Common myeloid progenitor, CD34-positive (primary cell): ENCODE measurements at regions of chr2 and their contacts with region 1.

Region 1: GRCh38 chr2:199739413-199740110 is 111.4 kb downstream of the FTCDNL1 start:
- DNase-seq: peak; percentile 65 to 83 (median 76)
- H3K4me3 ChIP-seq: peak overlapping the region in 3 of 7 experiments; percentile 20 to 34 (median 31)
- H3K27ac ChIP-seq: no peak overlapping the region
- H3K4me1 ChIP-seq: peaks cover 20 to 31% (median 27%) of the 10 kb centered on the region in 4 experiments
- H3K27me3 ChIP-seq: no peaks in the 10 kb centered on the region

Region 2: GRCh38 chr2:199727306-199727705 is 12.3 kb before region 1 on chr2:
- CTCF ChIA-PET with region 1: interaction called, 21 read pairs
- POLR2A ChIA-PET with region 1: no interaction called
- DNase-seq: peak in 1 of 3 donors; percentile 18
- H3K4me3 ChIP-seq: no peak overlapping the region
- H3K27ac ChIP-seq: no peak overlapping the region
- H3K4me1 ChIP-seq: no peaks in the 10 kb centered on the region
- H3K27me3 ChIP-seq: no peaks in the 10 kb centered on the region

Region 3: DNA sequence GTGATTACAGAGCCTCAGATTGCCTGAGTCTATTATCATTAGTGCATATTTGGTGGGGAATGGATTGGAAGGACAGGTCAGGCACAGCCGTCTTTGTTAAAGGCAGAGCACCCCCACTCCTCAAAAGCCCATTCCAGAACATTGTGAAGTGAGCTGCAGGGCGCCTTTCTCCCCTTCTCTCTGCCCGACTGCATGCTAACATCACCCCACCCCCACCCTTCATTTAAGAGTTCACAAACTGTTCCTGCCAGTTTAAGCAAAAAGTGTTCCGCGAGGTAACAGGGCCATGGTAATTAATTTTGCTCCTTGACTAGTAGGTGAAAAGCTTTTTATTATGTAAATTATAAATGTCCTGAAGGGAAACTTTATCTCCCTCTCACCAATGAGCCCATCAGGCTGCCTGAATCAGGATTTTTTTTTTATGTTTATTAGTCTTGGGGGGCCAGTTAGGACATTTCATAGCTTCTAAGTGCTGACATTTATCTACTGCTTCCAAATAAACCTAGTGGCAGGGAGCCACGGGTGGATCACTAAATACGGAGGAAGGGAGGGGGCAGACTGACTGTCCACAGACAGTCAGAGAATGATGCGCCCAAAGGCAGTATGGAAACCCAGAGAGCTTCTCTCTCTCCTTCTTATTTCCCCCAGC is 12.0 kb after region 1 on chr2:
- CTCF ChIA-PET with region 1: interaction called, 20 read pairs
- POLR2A ChIA-PET with region 1: no interaction called
- DNase-seq: no peak
- H3K4me3 ChIP-seq: no peak overlapping the region
- H3K27ac ChIP-seq: no peak overlapping the region
- H3K4me1 ChIP-seq: no peaks in the 10 kb centered on the region
- H3K27me3 ChIP-seq: no peaks in the 10 kb centered on the region